ENCODE measurements at regions of chr3 and their contacts with region 1.

Region 1: DNA sequence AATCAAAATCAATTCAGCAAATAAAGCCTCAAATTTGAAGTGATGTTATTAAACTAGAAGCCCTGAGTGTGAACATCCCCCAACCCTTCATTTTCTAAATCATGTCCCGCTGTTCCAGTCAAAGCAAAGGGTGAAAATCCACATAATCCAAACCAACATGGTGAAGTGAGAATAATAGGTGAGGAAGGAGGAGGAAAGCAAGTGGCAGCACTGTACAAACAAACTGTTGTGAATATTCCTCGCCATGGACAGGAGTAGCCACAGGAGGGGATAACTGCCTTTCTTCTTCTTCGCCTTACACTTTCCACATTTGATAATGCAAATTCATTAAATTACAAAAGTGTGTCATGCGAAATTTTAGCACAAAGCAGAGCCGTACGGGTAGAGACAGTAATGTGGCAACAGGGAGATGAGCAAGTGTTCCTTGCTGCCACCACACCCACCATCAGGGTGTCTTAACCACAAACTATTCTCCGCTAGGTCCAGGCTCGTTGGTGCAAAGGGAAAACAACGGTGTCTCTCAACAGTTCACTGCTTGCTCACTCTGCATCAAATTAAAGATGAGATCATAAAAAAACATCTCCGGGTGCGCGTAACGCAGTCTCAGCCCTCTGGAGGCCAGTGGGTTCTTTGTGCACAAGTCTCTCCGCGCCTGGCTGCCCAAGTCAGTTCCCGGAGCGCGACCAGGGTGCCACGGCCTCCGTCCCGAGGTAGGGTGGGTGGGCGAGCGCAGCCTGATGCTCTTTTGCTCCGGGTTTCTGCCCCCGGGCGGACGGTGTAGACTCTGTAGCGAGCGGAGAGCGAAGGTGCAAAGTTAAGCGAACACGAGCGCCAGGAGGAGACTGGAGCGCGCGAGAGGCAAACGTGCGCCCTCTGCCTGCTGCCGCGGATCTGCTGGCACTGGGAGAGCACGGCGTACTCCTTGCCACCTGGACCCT is 6.8 kb downstream of the EPHA3 start:
- DNase-seq: peak; percentile 78
- ATAC-seq: peak; percentile 96

Region 2: DNA sequence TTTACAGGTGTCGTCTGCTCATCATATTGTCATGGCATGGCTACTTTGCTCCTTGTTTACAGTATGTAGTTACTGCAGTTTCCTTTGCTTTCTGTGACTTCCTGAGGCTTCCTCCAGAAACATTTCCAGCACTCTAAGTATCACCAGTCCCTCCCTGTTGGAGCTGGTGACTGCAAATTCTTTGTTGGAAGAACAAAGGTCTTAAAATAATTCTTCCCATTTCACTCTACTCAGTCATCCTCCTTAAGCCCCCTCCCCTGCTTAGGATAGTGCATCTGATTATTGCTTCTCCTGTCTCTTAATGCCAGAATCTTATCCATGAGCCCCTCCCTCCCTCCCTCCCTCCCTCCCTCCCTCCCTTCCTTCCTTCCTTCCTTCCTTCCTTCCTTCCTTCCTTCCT is 892.4 kb before region 1 on chr3:
- intact Hi-C with region 1: loop called (anchors 5 kb)
- DNase-seq: no peak
- ATAC-seq: no peak

Measured in Right ventricle myocardium inferior (tissue), 1 donor.